Activated CD8-positive, alpha-beta T cell treated with anti-CD3 and anti-CD28 coated beads for 36 hours (primary cell): ENCODE measurements at regions of chr9 and their contacts with region 1.

Region 1: DNA sequence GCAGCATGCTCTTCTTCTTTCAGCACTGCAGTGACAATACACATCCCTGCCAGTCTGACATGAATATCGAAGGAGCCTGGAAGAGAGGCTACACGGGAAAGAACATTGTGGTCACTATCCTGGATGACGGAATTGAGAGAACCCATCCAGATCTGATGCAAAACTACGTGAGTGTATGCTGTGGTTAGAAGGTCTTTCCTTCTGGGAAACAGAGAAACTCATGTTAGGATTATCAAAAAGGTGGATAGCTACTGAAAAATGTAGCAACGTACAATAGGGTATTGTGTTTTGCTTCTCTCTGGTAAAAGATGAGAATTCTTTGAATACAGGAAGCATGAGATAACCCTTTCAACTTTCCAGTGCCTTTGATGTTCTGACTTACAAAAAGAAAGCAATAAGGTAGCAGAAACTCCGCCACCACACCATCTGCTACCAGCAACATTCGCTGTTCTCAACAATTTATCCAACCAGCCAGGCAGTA is 133.3 kb downstream of the PCSK5 start:
- DNase-seq: peak; percentile 68
- ATAC-seq: peak; percentile 76
- H3K4me3 Mint-ChIP-seq: peak overlapping the region; percentile 65
- H3K27ac Mint-ChIP-seq: peak overlapping the region; percentile 77
- H3K4me1 Mint-ChIP-seq: peaks cover 86% of the 10 kb centered on the region
- H3K27me3 Mint-ChIP-seq: no peaks in the 10 kb centered on the region
- CTCF ChIP-seq: no peak

Region 2: DNA sequence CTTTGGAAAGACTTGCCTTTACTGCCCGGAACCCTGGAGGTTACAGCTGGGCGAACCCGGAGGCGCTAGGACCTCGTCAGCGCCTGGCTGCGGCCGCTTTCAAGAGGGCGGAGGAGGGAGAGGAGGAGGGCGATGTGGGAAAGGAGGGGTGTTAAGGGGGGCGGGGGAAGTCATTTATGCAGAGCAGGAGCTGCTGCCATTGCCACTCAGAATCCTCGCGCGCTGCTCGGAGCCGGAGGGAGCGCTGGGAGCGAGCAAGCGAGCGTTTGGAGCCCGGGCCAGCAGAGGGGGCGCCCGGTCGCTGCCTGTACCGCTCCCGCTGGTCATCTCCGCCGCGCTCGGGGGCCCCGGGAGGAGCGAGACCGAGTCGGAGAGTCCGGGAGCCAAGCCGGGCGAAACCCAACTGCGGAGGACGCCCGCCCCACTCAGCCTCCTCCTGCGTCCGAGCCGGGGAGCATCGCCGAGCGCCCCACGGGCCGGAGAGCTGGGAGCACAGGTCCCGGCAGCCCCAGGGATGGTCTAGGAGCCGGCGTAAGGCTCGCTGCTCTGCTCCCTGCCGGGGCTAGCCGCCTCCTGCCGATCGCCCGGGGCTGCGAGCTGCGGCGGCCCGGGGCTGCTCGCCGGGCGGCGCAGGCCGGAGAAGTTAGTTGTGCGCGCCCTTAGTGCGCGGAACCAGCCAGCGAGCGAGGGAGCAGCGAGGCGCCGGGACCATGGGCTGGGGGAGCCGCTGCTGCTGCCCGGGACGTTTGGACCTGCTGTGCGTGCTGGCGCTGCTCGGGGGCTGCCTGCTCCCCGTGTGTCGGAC is 133.1 kb before region 1 on chr9 and contains the start of gene PCSK5:
- CTCF ChIA-PET with region 1: no interaction called
- POLR2A ChIA-PET with region 1: interaction called, 5 read pairs
- intact Hi-C with region 1: loop called (anchors 5 kb)
- DNase-seq: peak; percentile 92
- ATAC-seq: peak; percentile 87
- H3K4me3 Mint-ChIP-seq: peak within 1 kb of the TSS; percentile 95
- H3K27ac Mint-ChIP-seq: peak within 1 kb of the TSS; percentile 75
- H3K4me1 Mint-ChIP-seq: peaks cover 37% of the 10 kb centered on the region
- H3K27me3 Mint-ChIP-seq: no peaks in the 10 kb centered on the region
- CTCF ChIP-seq: peak; percentile 31
- total RNA-seq, gene PCSK5: 4.7 to 5.2 TPM

Region 3: GRCh38 chr9:75909776-75910175 is 114.0 kb before region 1 on chr9:
- CTCF ChIA-PET with region 1: no interaction called
- POLR2A ChIA-PET with region 1: no interaction called
- intact Hi-C with region 1: no loop called
- DNase-seq: peak; percentile 20
- ATAC-seq: no peak
- H3K4me3 Mint-ChIP-seq: no peak overlapping the region
- H3K27ac Mint-ChIP-seq: no peak overlapping the region
- H3K4me1 Mint-ChIP-seq: peaks cover 48% of the 10 kb centered on the region
- H3K27me3 Mint-ChIP-seq: no peaks in the 10 kb centered on the region
- CTCF ChIP-seq: no peak